ENCODE measurements at regions of chr12 and their contacts with region 1.

Region 1: GRCh38 chr12:3168223-3169221 is 91.3 kb downstream of the TSPAN9 start:
- DNase-seq: peak; percentile 90
- H3K4me3 ChIP-seq: peak overlapping the region; percentile 17
- H3K27ac ChIP-seq: peak overlapping the region; percentile 96
- H3K27me3 ChIP-seq: no peaks in the 10 kb centered on the region
- CTCF ChIP-seq: no peak

Region 2: DNA sequence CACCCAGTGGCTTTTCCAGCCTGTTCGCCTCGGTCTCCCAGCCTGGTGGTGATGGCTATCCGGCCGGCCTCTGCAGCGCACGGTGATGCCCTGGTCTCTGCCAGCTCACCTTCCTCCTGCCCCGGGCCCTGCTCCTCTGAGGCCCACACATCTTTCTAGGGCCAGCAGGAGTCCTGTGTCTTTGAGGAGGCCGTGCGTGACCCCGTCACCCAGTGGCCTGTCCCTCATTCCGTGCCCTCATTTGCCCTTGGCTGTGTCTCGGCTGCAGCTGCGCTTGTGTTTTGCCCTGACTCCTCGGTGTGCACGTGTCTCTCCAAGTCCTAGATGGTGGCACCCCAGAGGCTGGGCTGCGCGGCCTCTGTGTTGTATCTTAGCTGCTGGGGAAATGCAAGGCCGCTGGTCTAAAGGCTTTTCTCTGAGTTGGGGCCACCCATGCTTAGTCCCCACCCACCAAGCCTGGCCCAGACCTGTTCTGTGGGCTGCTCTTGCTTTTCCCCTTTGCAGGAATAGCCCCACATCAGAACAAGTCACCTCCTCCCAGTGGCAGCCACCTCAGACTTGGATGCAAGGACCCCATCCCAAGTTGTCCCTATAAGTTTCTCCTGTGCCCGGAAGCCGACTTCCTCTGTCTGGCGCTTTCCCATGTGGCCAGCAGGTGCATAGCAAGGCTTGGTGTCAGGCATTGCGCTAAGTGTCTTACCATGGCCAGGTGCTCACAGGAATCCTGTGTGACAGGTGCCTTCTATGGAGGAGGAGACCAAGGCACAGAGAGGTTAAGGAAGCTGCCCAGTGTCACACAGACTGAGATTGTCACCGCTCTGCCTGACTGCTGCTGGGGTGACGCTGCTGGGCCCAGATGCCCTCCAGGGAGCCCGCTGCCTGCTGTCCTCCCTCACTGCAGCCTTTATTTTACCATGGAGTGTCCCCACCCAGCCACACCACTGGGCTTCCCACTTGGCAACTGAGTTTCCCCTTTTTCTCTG is 26.9 kb before region 1 on chr12:
- CTCF ChIA-PET with region 1: no interaction called
- POLR2A ChIA-PET with region 1: no interaction called
- DNase-seq: no peak
- H3K4me3 ChIP-seq: no peak overlapping the region
- H3K27ac ChIP-seq: no peak overlapping the region
- H3K27me3 ChIP-seq: no peaks in the 10 kb centered on the region
- CTCF ChIP-seq: no peak

Region 3: GRCh38 chr12:3186546-3187215 is 18.2 kb after region 1 on chr12:
- CTCF ChIA-PET with region 1: interaction called, 3 read pairs
- POLR2A ChIA-PET with region 1: interaction called, 15 read pairs
- DNase-seq: no peak
- H3K4me3 ChIP-seq: no peak overlapping the region
- H3K27ac ChIP-seq: no peak overlapping the region
- H3K27me3 ChIP-seq: no peaks in the 10 kb centered on the region
- CTCF ChIP-seq: no peak

Measured in AG04450 (cell line).